ENCODE measurements at regions of chr1 and their contacts with region 1.

Region 1: DNA sequence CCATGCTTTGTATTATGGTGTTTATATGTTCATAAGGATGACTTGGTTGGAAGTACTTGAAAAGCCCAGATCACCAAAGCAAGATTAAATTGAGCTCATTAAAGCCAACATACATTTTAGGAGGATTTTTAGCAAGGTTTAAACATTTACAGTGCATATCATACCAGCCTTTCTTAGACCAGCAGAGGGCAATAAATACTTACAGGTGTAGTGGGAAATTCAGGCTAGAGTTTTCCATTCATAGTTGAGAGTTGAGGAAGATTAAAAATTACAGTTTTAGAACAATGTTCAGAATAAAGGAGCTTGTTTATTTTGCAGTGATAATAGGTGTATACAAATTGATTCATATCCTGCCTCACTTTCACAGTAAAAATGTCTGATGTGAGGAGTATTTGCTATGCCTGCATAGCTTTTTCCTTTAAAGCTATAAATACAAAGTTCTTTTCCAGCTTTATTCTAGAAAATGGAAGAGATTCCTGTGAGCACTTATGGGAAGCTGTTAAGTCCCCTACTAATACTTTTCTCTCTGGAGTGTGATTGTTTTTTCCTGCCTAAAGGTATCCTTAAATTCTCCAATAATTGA is 35.3 kb downstream of the DTL start:
- DNase-seq: no peak
- ATAC-seq: peak; percentile 24; the same call in 1 of the 2 replicates
- H3K4me3 Mint-ChIP-seq: no peak overlapping the region
- H3K27ac Mint-ChIP-seq: peak overlapping the region; percentile 57; the same call in 1 of the 2 replicates
- H3K4me1 Mint-ChIP-seq: no peaks in the 10 kb centered on the region
- H3K27me3 Mint-ChIP-seq: no peaks in the 10 kb centered on the region
- CTCF ChIP-seq: no peak

Region 2: GRCh38 chr1:212293579-212293978 is 222.8 kb after region 1 on chr1:
- CTCF ChIA-PET with region 1: interaction called, 17 read pairs
- POLR2A ChIA-PET with region 1: no interaction called
- DNase-seq: no peak
- ATAC-seq: 0 out of 2 replicates have a peak, but pooled peaks have one; percentile 48
- H3K4me3 Mint-ChIP-seq: no peak overlapping the region
- H3K27ac Mint-ChIP-seq: no peak overlapping the region
- H3K4me1 Mint-ChIP-seq: peaks cover 63% of the 10 kb centered on the region
- H3K27me3 Mint-ChIP-seq: no peaks in the 10 kb centered on the region
- CTCF ChIP-seq: no peak

Region 3: GRCh38 chr1:212368073-212368484 is 297.3 kb after region 1 on chr1:
- CTCF ChIA-PET with region 1: interaction called, 13 read pairs
- POLR2A ChIA-PET with region 1: no interaction called
- DNase-seq: peak; percentile 59
- ATAC-seq: peak; percentile 96
- H3K4me3 Mint-ChIP-seq: no peak overlapping the region
- H3K27ac Mint-ChIP-seq: no peak overlapping the region
- H3K4me1 Mint-ChIP-seq: no peaks in the 10 kb centered on the region
- H3K27me3 Mint-ChIP-seq: no peaks in the 10 kb centered on the region
- CTCF ChIP-seq: peak; percentile 76

Measured in WTC11 (cell line).